ENCODE measurements at regions of chr1 and their contacts with region 1.

Region 1: DNA sequence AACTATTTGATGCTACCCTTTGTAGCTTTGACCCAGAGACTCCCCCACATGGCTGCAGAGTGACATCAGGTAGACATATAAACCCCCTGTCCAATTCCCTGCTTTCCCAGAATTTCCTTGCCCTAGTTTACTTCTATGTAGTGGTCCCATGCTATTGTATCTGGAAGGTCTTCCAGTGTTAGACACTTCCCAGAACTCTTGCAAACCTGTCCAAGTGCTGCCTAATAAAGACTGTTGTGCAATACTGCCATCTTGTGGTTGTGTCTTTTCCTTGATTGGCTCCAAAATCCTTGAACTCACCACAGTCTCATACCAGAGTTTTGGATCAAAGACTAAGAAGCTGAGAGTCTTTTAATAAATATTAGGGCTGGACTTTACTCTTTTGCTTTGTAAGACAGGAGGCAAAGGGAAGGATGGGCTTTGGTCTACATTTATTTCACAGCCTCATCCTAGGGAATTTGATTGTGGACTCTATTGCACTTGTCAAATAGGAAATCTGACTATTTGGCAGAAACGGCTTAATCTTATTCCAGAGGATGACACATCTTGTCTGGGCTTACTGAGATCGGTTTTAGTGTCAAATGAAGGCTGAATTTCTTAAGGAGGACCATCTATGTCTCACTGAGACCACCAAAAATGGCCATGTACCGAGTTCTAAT is 169.9 kb downstream of the LRRC7 start:
- DNase-seq: no peak
- H3K4me3 ChIP-seq: no peak overlapping the region
- H3K27ac ChIP-seq: no peak overlapping the region
- H3K4me1 ChIP-seq: no peaks in the 10 kb centered on the region
- H3K27me3 ChIP-seq: no peaks in the 10 kb centered on the region
- CTCF ChIP-seq: peak in 3 of 4 experiments; percentile 41 to 57 (median 41)
- EP300 ChIP-seq: no peak
- POLR2A ChIP-seq: no peak

Region 2: DNA sequence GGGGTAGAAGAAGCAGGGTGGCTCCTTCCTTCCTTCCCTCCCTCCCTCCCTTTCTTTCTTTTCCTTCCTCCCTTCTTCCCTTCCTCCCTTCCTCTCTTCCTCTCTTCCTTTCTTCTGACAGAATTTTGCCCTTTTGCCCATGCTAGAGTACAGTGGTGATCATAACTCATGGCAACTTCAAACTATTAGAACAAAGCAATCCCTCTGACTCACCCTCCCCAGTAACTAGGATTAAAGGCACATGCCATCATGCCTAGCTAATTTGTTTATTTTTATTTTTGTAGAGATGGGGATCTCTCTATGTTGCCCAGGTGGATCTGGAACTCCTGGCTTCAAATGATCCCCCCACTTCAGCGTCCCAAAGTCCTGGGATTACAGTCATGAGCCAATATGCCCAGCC is 1277.9 kb before region 1 on chr1:
- intact Hi-C with region 1: loop called (anchors 10 kb)
- DNase-seq: no peak
- H3K4me3 ChIP-seq: no peak overlapping the region
- H3K27ac ChIP-seq: no peak overlapping the region
- H3K4me1 ChIP-seq: no peaks in the 10 kb centered on the region
- H3K27me3 ChIP-seq: no peaks in the 10 kb centered on the region
- CTCF ChIP-seq: no peak
- EP300 ChIP-seq: no peak
- POLR2A ChIP-seq: no peak

Region 3: GRCh38 chr1:68600049-68600661 is 1137.5 kb before region 1 on chr1:
- intact Hi-C with region 1: loop called (anchors 2 kb)
- DNase-seq: no peak
- H3K4me3 ChIP-seq: peak overlapping the region in 2 of 4 donors; percentile 11 to 20
- H3K27ac ChIP-seq: no peak overlapping the region
- H3K4me1 ChIP-seq: no peaks in the 10 kb centered on the region
- H3K27me3 ChIP-seq: no peaks in the 10 kb centered on the region
- CTCF ChIP-seq: peak in 3 of 4 experiments; percentile 19 to 46 (median 41)
- EP300 ChIP-seq: peak in 1 of 4 donors; percentile 5
- POLR2A ChIP-seq: no peak

Region 4: DNA sequence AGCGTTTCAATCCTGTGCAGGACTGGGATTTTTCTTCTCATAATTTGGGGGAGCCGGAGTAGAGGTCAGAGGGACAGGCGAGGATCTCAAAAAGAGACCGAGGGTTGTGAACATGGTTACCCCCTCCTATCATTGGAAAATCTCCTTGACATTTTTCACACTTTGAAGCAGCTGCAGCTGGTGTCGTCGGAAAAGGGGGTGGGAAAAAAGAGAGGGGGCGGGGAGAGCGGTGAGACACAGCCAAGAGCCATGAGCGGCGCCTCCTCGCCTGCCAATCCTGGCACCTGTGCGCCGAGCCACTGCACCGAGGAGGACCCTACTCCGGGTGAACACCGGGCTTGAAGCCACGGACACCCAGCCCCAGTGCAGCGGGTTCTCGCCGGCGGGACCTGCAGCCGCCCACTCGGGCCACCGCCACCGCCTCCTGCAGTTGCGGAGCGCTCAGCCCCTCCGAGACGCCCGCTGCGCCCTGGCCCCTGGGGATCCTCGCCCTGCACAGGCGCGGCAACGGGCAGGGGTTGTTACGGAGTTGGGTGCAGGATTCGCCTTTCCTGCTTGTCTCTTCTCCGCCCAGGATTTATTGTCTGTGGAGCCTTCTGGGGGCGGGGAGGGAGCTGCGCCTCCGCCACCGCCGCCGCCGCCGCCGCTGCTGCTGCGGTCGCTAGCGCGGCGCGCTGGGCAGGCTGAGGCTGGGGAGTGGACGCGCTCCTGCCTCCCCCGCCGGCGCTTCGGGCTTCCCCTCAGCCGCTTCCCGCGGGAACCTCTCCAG is 169.8 kb before region 1 on chr1 and contains the start of gene LRRC7:
- intact Hi-C with region 1: no loop called
- DNase-seq: no peak
- H3K4me3 ChIP-seq: peak within 1 kb of the TSS; percentile 34 to 68 (median 56)
- H3K27ac ChIP-seq: peak within 1 kb of the TSS in 3 of 4 donors; percentile 43 to 58 (median 47)
- H3K4me1 ChIP-seq: peaks cover 0 to 26% (median 22%) of the 10 kb centered on the region in 4 donors
- H3K27me3 ChIP-seq: peaks cover 0 to 33% (median 6%) of the 10 kb centered on the region in 3 donors
- CTCF ChIP-seq: no peak
- EP300 ChIP-seq: no peak
- POLR2A ChIP-seq: no peak
- total RNA-seq, gene LRRC7: 0.16 to 1.9 (median 0.92) TPM

Region 5: GRCh38 chr1:69836971-69837636 is 99.4 kb after region 1 on chr1:
- intact Hi-C with region 1: no loop called
- DNase-seq: no peak
- H3K4me3 ChIP-seq: no peak overlapping the region
- H3K27ac ChIP-seq: no peak overlapping the region
- H3K4me1 ChIP-seq: no peaks in the 10 kb centered on the region
- H3K27me3 ChIP-seq: no peaks in the 10 kb centered on the region
- CTCF ChIP-seq: no peak
- EP300 ChIP-seq: no peak
- POLR2A ChIP-seq: no peak

Measured in sigmoid colon (tissue), 7 donors.